PC-9 (cell line): ENCODE measurements at regions of chr5 and their contacts with region 1.

Region 1: GRCh38 chr5:84437673-84438315 is 53.1 kb upstream of the EDIL3 start:
- DNase-seq: peak in 1 of 2 experiments; percentile 64
- H3K4me3 ChIP-seq: no peak overlapping the region
- H3K27ac ChIP-seq: 0 out of 2 replicates have a peak overlapping the region, but pooled peaks have one; percentile 21
- H3K4me1 ChIP-seq: peaks cover 36% of the 10 kb centered on the region
- H3K27me3 ChIP-seq: no peaks in the 10 kb centered on the region
- CTCF ChIP-seq: no peak

Region 2: GRCh38 chr5:83343299-83343698 is 1094.5 kb before region 1 on chr5:
- CTCF ChIA-PET with region 1: no interaction called
- POLR2A ChIA-PET with region 1: no interaction called
- intact Hi-C with region 1: no loop called
- DNase-seq: no peak
- H3K4me3 ChIP-seq: no peak overlapping the region
- H3K27ac ChIP-seq: no peak overlapping the region
- H3K4me1 ChIP-seq: no peaks in the 10 kb centered on the region
- H3K27me3 ChIP-seq: no peaks in the 10 kb centered on the region
- CTCF ChIP-seq: no peak

Region 3: DNA sequence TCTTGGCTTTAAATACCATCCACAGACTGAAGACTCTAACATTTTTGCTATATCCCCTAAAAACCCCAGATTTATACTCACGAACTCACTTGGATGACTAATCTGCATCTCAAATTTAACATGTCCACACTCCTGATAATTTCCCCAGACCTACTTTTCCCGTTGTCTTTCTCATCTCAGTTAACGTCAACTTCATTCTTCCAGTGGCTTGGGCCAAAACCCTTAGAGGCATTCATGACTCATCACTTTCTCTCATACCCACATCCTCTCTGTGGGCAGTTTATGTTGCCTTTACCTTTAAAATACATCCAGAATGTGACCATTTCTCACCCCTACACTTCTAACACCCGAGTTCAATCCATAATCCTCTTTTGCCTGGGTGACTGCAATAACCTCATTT is 149.8 kb before region 1 on chr5:
- CTCF ChIA-PET with region 1: no interaction called
- POLR2A ChIA-PET with region 1: no interaction called
- intact Hi-C with region 1: loop called (anchors 5 kb)
- DNase-seq: peak; percentile 43 to 62
- H3K4me3 ChIP-seq: no peak overlapping the region
- H3K27ac ChIP-seq: peak overlapping the region; percentile 6; the same call in 1 of the 2 replicates
- H3K4me1 ChIP-seq: peaks cover 14% of the 10 kb centered on the region
- H3K27me3 ChIP-seq: no peaks in the 10 kb centered on the region
- CTCF ChIP-seq: no peak

Region 4: DNA sequence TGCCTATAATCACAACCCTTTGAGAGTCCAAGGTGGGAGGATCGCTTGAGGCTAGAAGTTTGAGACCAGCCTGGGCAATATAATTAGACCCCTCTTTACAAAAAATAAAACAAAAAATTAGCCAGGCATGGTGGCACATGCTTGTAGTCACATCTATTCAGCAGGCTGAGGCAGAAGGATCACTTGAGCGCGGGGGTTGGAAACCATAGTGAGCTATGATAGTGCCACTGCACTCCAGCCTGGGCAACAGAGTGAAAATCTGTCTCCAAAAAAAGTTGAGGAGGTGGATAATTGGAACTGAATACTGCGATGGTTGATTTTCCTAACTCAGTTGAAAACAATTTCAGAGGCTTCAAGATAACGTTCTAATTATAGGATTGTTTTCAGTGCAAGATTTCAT is 105.7 kb before region 1 on chr5:
- CTCF ChIA-PET with region 1: no interaction called
- POLR2A ChIA-PET with region 1: no interaction called
- intact Hi-C with region 1: no loop called
- DNase-seq: no peak
- H3K4me3 ChIP-seq: no peak overlapping the region
- H3K27ac ChIP-seq: no peak overlapping the region
- H3K4me1 ChIP-seq: no peaks in the 10 kb centered on the region
- H3K27me3 ChIP-seq: no peaks in the 10 kb centered on the region
- CTCF ChIP-seq: no peak

Region 5: GRCh38 chr5:84393969-84394368 is 43.8 kb before region 1 on chr5:
- CTCF ChIA-PET with region 1: no interaction called
- POLR2A ChIA-PET with region 1: no interaction called
- intact Hi-C with region 1: loop called (anchors 2 kb)
- DNase-seq: peak; percentile 65 to 72
- H3K4me3 ChIP-seq: no peak overlapping the region
- H3K27ac ChIP-seq: no peak overlapping the region
- H3K4me1 ChIP-seq: peaks cover 12% of the 10 kb centered on the region
- H3K27me3 ChIP-seq: no peaks in the 10 kb centered on the region
- CTCF ChIP-seq: no peak

Region 6: DNA sequence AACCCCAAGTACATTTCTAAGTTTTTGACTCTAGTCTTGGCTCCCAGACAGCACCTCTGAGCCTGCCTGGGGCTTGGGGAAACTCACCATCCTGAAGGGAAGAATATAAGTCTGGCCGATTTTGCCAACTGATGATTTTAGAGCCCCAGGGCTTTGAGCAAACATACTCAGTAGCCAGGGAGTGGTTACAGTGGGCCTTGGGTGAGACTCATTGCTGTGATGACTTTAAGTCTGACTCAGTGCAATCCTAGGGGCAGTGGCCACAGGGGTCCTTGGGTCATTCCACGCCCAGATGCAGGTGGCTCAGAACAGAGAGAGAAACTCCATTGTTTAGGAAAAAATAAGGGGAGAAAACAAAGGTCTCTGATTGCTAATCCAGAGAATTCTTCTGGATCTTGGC is 258.9 kb after region 1 on chr5:
- CTCF ChIA-PET with region 1: no interaction called
- POLR2A ChIA-PET with region 1: no interaction called
- intact Hi-C with region 1: loop called (anchors 5 kb)
- DNase-seq: peak; percentile 60 to 78
- H3K4me3 ChIP-seq: no peak overlapping the region
- H3K27ac ChIP-seq: peak overlapping the region; percentile 60
- H3K4me1 ChIP-seq: peaks cover 19% of the 10 kb centered on the region
- H3K27me3 ChIP-seq: no peaks in the 10 kb centered on the region
- CTCF ChIP-seq: no peak